GM23248 (cell line): ENCODE measurements at regions of chr2 and their contacts with region 1.

Region 1: DNA sequence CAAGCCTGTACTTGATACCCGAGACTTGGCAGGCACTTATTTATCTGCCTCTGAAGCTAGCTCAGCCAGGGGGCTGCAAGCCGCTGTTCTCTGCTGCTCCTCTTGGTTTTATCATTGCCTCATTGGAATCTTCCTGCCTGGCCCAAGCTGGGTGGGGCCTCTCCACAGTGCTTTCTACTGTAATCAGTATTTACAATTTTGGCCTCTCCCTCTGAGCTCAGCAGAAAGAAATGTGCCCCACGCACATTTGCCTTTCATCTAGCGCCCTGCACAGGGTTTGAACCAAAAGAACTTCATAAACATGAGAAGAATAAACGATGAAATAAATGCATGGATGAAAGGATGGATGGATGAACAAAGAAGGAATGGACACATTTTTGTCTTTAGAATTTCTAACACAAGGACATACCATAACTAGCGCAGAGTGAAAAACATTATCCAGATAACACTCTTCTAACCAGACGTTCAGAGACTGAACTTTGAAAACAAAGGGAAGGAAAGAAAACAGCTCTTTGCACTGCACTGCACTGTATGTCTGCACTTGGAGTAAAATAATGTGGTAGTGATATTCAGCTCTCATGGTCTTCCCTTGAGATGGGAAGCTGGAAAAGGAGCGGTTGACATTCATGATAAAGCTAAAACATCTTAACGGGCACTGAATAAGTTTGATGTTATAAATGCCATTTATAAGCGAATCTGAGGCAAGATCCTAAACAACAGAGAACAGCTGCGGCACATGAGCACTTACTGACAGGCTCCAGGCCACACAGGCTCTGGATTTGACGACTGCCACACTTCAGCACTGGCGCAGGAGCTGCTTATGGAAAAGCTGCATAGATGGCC is 86.8 kb upstream of the SP3 start:
- DNase-seq: peak; percentile 76
- H3K4me3 ChIP-seq: no peak overlapping the region; the same call in 1 of the 2 replicates
- H3K27ac ChIP-seq: no peak overlapping the region
- H3K4me1 ChIP-seq: peaks cover 12% of the 10 kb centered on the region
- H3K27me3 ChIP-seq: no peaks in the 10 kb centered on the region

Region 2: DNA sequence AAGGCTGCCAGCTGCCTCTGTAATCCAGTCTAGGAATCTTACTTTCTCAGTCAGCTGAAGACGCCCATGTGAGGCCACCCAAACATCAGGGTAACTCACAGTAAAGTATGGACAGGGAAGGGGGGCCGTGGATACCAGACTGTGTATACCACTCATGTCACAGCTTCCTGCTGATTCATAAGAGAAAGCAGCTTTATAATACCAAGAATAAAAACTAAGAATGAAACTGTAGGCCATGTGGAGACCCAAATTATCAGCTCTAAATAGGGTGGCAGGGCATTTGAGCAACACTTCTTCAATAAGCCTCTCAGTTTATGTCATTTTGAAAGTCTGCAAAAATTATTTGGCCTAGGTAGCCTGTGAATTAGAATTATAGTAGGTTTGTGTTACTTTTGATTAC is 812.3 kb before region 1 on chr2:
- in situ Hi-C with region 1: no loop called
- DNase-seq: no peak
- H3K4me3 ChIP-seq: no peak overlapping the region
- H3K27ac ChIP-seq: no peak overlapping the region
- H3K4me1 ChIP-seq: no peaks in the 10 kb centered on the region
- H3K27me3 ChIP-seq: no peaks in the 10 kb centered on the region

Region 3: GRCh38 chr2:173402405-173402974 is 649.5 kb before region 1 on chr2:
- in situ Hi-C with region 1: loop called (anchors 25 kb)
- DNase-seq: peak; percentile 86
- H3K4me3 ChIP-seq: peak overlapping the region; percentile 63
- H3K27ac ChIP-seq: no peak overlapping the region
- H3K4me1 ChIP-seq: no peaks in the 10 kb centered on the region
- H3K27me3 ChIP-seq: peaks cover 54% of the 10 kb centered on the region